Naive thymus-derived CD4-positive, alpha-beta T cell (primary cell): ENCODE measurements at regions of chr11 and their contacts with region 1.

Region 1: GRCh38 chr11:61792310-61793085 is at the starts of genes FEN1 and TMEM258:
- DNase-seq: peak; percentile 82 to 91 (median 88)
- ATAC-seq: peak; percentile 91
- H3K4me3 ChIP-seq: peak within 1 kb of the TSS; percentile 82
- H3K4me3 Mint-ChIP-seq: peak within 1 kb of the TSS; percentile 91 to 99 (median 96)
- H3K27ac ChIP-seq: peak within 1 kb of the TSS; percentile 96
- H3K27ac Mint-ChIP-seq: peak within 1 kb of the TSS; percentile 96 to 100 (median 99)
- H3K4me1 ChIP-seq: peaks cover 9 to 14% of the 10 kb centered on the region in 2 donors
- H3K4me1 Mint-ChIP-seq: peaks cover 14 to 57% (median 34%) of the 10 kb centered on the region in 7 donors
- H3K27me3 ChIP-seq: no peaks in the 10 kb centered on the region
- H3K27me3 Mint-ChIP-seq: no peaks in the 10 kb centered on the region
- total RNA-seq, gene FEN1: 7.6 to 101 (median 7.9) TPM
- total RNA-seq, gene TMEM258: 58.4 to 182 (median 83.3) TPM

Region 2: GRCh38 chr11:61776551-61777075 is 15.9 kb before region 1 on chr11:
- CTCF ChIA-PET with region 1: interaction called, 3 read pairs
- POLR2A ChIA-PET with region 1: no interaction called
- intact Hi-C with region 1: loop called in 1 of 2 experiments (anchors 1 kb)
- DNase-seq: peak in 8 of 9 donors; percentile 27 to 71 (median 37)
- ATAC-seq: peak; percentile 66
- H3K4me3 ChIP-seq: peak overlapping the region; percentile 44
- H3K4me3 Mint-ChIP-seq: peak overlapping the region in 9 of 10 donors; percentile 34 to 77 (median 68)
- H3K27ac ChIP-seq: no peak overlapping the region
- H3K27ac Mint-ChIP-seq: peak overlapping the region in 2 of 9 donors; percentile 43 to 80
- H3K4me1 ChIP-seq: peaks cover 4 to 11% of the 10 kb centered on the region in 2 donors
- H3K4me1 Mint-ChIP-seq: peaks cover 5 to 21% (median 10%) of the 10 kb centered on the region in 7 donors
- H3K27me3 ChIP-seq: no peaks in the 10 kb centered on the region
- H3K27me3 Mint-ChIP-seq: peaks cover 0 to 6% (median 0%) of the 10 kb centered on the region in 5 donors

Region 3: GRCh38 chr11:61891331-61892084 is 99.0 kb after region 1 on chr11 and contains the start of gene FADS3:
- CTCF ChIA-PET with region 1: interaction called, 4 read pairs
- POLR2A ChIA-PET with region 1: no interaction called
- intact Hi-C with region 1: loop called in 1 of 2 experiments (anchors 1 kb)
- DNase-seq: peak; percentile 39 to 78 (median 45)
- ATAC-seq: peak; percentile 77
- H3K4me3 ChIP-seq: peak within 1 kb of the TSS; percentile 64
- H3K4me3 Mint-ChIP-seq: peak within 1 kb of the TSS; percentile 73 to 93 (median 82)
- H3K27ac ChIP-seq: peak within 1 kb of the TSS; percentile 69
- H3K27ac Mint-ChIP-seq: peak within 1 kb of the TSS in 7 of 9 donors; percentile 36 to 86 (median 73)
- H3K4me1 ChIP-seq: peaks cover 9% of the 10 kb centered on the region in 2 donors
- H3K4me1 Mint-ChIP-seq: peaks cover 0 to 11% (median 4%) of the 10 kb centered on the region in 7 donors
- H3K27me3 ChIP-seq: no peaks in the 10 kb centered on the region
- H3K27me3 Mint-ChIP-seq: peaks cover 0 to 10% (median 0%) of the 10 kb centered on the region in 5 donors
- total RNA-seq, gene FADS3: 1.4 to 8.6 (median 6.2) TPM

Region 4: GRCh38 chr11:62025487-62026105 is 233.1 kb after region 1 on chr11:
- CTCF ChIA-PET with region 1: no interaction called
- POLR2A ChIA-PET with region 1: no interaction called
- intact Hi-C with region 1: loop called in 1 of 2 experiments (anchors 1 kb)
- DNase-seq: peak; percentile 45 to 97 (median 93)
- ATAC-seq: peak; percentile 91
- H3K4me3 ChIP-seq: peak overlapping the region; percentile 11
- H3K4me3 Mint-ChIP-seq: peak overlapping the region; percentile 68 to 84 (median 76)
- H3K27ac ChIP-seq: peak overlapping the region; percentile 93
- H3K27ac Mint-ChIP-seq: peak overlapping the region; percentile 95 to 100 (median 99)
- H3K4me1 ChIP-seq: peaks cover 9 to 17% of the 10 kb centered on the region in 2 donors
- H3K4me1 Mint-ChIP-seq: peaks cover 6 to 28% (median 24%) of the 10 kb centered on the region in 7 donors
- H3K27me3 ChIP-seq: no peaks in the 10 kb centered on the region
- H3K27me3 Mint-ChIP-seq: no peaks in the 10 kb centered on the region

Region 5: DNA sequence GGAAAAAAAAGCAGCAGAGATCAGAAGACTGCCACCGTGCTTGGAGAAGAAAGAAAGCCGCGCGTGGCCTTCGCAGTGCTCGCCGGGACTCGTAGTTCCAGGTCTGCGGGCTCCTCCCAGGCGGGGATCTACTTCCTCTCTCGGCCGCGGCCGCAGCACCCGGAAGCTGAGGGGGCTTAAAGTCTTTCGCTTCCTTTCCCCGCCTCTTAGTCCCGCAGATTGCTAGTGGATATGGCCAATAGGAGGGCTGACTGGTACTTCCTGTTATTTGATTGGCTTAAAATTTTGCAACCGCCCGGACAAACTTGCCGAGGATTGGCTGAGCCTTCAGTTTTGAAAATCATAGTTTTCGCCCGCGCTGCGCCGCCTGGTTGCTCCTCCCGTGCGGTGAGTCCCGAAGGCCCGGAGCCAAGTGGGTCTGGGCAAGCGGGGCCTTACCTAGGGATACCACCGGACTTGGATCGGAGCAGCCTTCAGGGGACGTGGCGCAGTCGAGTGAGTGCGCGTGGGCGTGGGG is 331.2 kb after region 1 on chr11 and contains the start of gene INCENP:
- CTCF ChIA-PET with region 1: no interaction called
- POLR2A ChIA-PET with region 1: interaction called, 3 read pairs
- intact Hi-C with region 1: loop called (anchors 1 kb)
- DNase-seq: peak; percentile 75 to 97 (median 95)
- ATAC-seq: peak; percentile 100
- H3K4me3 ChIP-seq: peak within 1 kb of the TSS; percentile 87
- H3K4me3 Mint-ChIP-seq: peak within 1 kb of the TSS; percentile 89 to 95 (median 94)
- H3K27ac ChIP-seq: peak within 1 kb of the TSS; percentile 81
- H3K27ac Mint-ChIP-seq: peak within 1 kb of the TSS; percentile 53 to 95 (median 91)
- H3K4me1 ChIP-seq: peaks cover 6 to 9% of the 10 kb centered on the region in 2 donors
- H3K4me1 Mint-ChIP-seq: peaks cover 22 to 40% (median 28%) of the 10 kb centered on the region in 7 donors
- H3K27me3 ChIP-seq: no peaks in the 10 kb centered on the region
- H3K27me3 Mint-ChIP-seq: peaks cover 0 to 15% (median 0%) of the 10 kb centered on the region in 5 donors
- total RNA-seq, gene INCENP: 18.6 to 124 (median 25.6) TPM

Region 6: GRCh38 chr11:62324738-62325556 is 532.4 kb after region 1 on chr11:
- CTCF ChIA-PET with region 1: no interaction called
- POLR2A ChIA-PET with region 1: no interaction called
- intact Hi-C with region 1: loop called in 1 of 2 experiments (anchors 1 kb)
- DNase-seq: peak in 8 of 9 donors; percentile 43 to 60 (median 54)
- ATAC-seq: peak; percentile 98
- H3K4me3 ChIP-seq: no peak overlapping the region
- H3K4me3 Mint-ChIP-seq: no peak overlapping the region
- H3K27ac ChIP-seq: no peak overlapping the region
- H3K27ac Mint-ChIP-seq: no peak overlapping the region
- H3K4me1 ChIP-seq: no peaks in the 10 kb centered on the region
- H3K4me1 Mint-ChIP-seq: peaks cover 0 to 7% (median 0%) of the 10 kb centered on the region in 7 donors
- H3K27me3 ChIP-seq: no peaks in the 10 kb centered on the region
- H3K27me3 Mint-ChIP-seq: peaks cover 5 to 21% (median 9%) of the 10 kb centered on the region in 5 donors

Region 7: DNA sequence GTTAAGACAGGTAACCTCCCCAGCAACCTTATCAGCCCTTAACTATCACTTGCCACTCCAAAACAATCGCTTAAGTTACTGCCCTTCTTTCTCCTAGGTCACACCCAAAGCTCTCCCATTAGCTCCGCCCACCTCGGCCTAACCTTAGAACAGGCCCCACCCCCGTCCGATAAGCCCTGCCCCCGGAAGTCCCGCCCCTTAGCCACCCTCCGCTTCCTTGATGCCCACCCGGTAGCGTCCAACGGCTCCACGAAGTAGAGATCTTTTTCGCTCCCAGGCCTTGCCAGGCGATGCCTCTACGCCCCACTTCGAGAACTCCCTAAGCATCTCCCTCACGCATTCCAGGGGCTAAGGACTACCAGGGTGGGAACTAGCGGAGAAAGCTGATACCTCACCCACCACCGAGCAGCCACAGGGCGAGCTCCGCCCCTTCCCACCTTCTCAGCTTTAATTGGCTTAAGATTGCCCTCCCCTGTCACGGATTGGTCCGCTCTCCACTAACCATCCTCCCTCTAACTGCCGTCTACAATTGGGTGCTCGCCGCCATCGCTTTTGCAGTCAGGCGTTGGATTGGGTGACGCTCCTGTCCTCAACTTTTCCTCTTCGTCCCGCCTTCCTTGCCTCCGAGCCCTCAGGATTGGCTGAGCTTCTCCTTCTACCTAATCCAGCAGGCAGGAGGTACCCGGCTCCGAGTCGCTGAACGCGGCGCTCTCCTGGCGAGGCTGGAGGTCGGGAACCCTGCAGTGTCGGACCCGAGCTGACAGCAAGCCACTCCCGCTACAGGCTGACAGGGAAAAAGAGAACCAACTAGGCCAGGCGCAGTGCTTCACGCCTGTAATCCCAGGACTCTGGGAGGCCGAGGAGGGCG is 961.5 kb after region 1 on chr11 and contains the start of gene ZBTB3:
- CTCF ChIA-PET with region 1: no interaction called
- POLR2A ChIA-PET with region 1: no interaction called
- intact Hi-C with region 1: no loop called
- DNase-seq: peak; percentile 89 to 99 (median 98)
- ATAC-seq: peak; percentile 96
- H3K4me3 ChIP-seq: peak within 1 kb of the TSS; percentile 94
- H3K4me3 Mint-ChIP-seq: peak within 1 kb of the TSS; percentile 86 to 100 (median 98)
- H3K27ac ChIP-seq: peak within 1 kb of the TSS; percentile 83
- H3K27ac Mint-ChIP-seq: peak within 1 kb of the TSS; percentile 93 to 99 (median 95)
- H3K4me1 ChIP-seq: peaks cover 15 to 16% of the 10 kb centered on the region in 2 donors
- H3K4me1 Mint-ChIP-seq: peaks cover 9 to 41% (median 29%) of the 10 kb centered on the region in 7 donors
- H3K27me3 ChIP-seq: no peaks in the 10 kb centered on the region
- H3K27me3 Mint-ChIP-seq: no peaks in the 10 kb centered on the region
- total RNA-seq, gene ZBTB3: 6.4 to 24.1 (median 19.0) TPM